ENCODE measurements at regions of chr16 and their contacts with region 1.

Region 1: GRCh38 chr16:21584817-21585216 is 14.6 kb upstream of the METTL9 start:
- DNase-seq: no peak
- H3K4me3 ChIP-seq: no peak overlapping the region
- H3K27me3 ChIP-seq: no peaks in the 10 kb centered on the region
- CTCF ChIP-seq: no peak

Region 2: DNA sequence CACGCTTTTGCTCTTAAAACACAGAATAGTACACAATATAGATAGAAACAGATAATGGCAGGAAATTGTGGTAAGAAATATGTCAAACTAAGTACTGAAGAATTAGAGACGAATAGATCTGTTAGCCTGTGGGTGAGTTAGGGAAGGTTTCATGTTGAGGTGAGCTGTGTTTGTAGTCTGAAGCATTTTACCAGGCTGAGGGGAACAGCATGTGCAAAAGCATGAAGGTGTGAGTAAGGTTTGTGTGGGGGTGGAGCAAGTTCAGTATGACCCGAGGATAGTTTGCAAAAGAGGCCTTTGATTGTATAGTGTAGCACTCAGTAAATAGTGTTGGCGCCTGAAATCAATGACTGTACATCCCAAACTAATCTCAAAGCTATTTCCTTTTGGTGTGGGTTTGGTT is 53.8 kb after region 1 on chr16:
- CTCF ChIA-PET with region 1: interaction called, 64 read pairs
- POLR2A ChIA-PET with region 1: no interaction called
- DNase-seq: no peak
- H3K4me3 ChIP-seq: no peak overlapping the region
- H3K27me3 ChIP-seq: no peaks in the 10 kb centered on the region
- CTCF ChIP-seq: no peak

Region 3: DNA sequence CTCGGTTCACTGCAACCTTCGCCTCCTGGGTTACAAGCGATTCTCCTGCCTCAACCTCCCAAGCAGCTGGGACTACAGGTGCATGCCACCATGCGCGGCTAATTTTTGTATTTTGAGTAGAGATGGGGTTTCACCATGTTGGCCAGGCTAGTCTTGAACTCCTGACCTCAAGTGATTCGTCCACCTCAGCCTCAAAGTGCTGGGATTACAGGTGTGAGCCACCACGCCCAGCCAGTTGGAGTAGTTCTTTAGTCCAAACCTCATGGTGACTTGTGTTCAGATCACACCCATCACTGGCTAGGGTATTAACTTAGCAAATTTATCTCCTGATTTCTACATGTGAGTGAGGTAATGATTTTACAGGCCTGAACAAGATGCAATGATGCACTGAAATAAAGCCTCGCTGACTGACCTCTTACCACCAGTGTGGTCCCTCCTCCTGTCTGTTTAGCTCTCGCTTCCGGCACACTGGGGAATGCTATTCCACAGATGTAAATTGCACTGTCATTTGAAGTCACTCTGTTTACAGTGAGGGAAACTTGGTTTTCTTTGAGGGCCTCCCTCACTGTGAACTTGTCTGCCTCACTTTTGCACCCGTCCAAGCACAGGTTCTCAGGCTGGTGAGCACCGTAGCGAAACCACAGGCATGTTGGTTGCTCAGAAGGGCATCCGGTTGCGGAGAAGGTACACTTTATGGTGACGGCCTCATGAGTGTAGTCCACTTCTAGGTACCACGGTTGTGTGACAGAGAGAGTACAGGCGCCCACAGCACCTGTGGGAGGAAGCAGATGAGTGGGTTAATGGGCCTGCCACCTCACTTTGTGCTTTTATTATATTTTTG is 62.1 kb after region 1 on chr16:
- CTCF ChIA-PET with region 1: interaction called, 64 read pairs
- POLR2A ChIA-PET with region 1: no interaction called
- DNase-seq: no peak
- H3K4me3 ChIP-seq: no peak overlapping the region
- H3K27me3 ChIP-seq: no peaks in the 10 kb centered on the region
- CTCF ChIP-seq: no peak

Region 4: GRCh38 chr16:21656795-21657768 is 72.3 kb after region 1 on chr16:
- CTCF ChIA-PET with region 1: interaction called, 11 read pairs
- POLR2A ChIA-PET with region 1: no interaction called
- DNase-seq: no peak
- H3K4me3 ChIP-seq: no peak overlapping the region
- H3K27me3 ChIP-seq: no peaks in the 10 kb centered on the region
- CTCF ChIP-seq: peak; percentile 81

Region 5: DNA sequence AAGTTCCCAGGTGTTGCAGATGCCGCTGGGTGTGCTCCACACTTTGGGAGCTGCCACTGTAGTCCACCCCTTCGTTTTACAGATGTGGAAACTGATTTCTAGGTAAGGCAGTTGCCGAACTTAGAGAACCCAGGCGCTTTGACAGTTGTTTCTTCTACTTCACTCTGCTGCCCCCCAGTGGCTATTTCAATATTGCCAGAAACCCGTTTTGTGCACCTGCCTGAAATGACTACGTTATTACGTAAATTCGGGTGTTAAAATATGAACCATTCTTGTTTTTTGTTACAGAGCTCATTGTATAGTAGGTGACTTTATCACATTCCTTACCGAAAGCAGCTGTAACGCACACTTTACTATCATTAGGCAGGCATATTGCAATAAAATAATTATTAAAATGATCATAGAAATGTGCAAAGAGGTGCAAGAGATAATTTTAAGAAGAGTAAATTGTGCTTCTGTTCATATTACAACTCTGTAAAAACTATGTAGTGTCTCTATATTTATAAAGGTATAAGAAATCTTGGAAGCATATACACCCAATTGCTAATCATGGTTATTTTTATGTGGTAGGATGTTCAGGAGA is 123.8 kb after region 1 on chr16:
- CTCF ChIA-PET with region 1: interaction called, 53 read pairs
- POLR2A ChIA-PET with region 1: no interaction called
- DNase-seq: peak; percentile 13
- H3K4me3 ChIP-seq: no peak overlapping the region
- H3K27me3 ChIP-seq: peaks cover 5% of the 10 kb centered on the region
- CTCF ChIP-seq: peak; percentile 85